Posterior vena cava (tissue), 2 donors: ENCODE measurements at regions of chr11 and their contacts with region 1.

Region 1: DNA sequence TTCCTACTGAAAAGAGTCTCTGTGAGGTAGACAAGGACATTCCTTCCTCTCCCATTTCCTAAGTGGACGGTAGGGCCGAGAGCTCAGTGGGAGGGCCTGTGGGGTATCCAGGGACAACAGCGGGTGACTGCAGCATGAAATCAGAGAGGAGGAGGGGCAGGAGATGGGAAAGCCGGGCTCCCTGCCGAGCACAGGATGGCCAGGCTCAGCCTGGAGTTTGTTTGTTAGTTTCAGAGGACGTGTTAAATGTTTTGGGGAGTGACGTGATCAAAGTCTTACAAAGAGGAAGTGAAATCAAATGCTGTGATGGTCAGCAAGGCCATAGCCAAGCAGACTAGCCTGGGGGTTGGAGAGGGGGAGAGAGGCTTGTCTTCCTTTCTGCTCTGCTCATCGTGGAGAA is 152.7 kb downstream of the ADAMTS15 start:
- DNase-seq: peak; percentile 90

Region 2: GRCh38 chr11:130449996-130450769 is 151.0 kb before region 1 on chr11:
- intact Hi-C with region 1: loop called in 1 of 2 experiments (anchors 10 kb)
- DNase-seq: peak; percentile 96

Region 3: DNA sequence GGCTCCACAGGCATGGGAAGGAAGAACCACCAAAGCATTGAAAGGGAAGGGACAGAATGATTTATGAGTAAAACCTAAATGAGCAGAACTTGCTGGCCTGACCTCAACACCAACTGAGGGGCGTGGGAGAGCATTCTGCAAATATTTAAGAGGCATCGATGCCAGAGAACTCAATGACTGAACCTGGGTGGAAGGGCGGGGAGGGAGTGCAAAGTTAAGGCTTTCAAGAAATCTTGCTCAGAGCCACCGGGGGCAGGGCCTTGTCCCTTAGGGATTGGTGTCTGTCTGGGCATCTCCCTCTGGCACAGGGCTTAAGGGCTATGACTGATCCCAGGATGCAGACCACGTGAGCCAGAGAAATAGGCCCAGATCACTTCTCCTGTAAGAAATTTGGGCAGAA is 15.6 kb before region 1 on chr11:
- intact Hi-C with region 1: loop called in 1 of 2 experiments (anchors 1 kb)
- DNase-seq: peak; percentile 83